ENCODE measurements at regions of chr7 and their contacts with region 1.

Region 1: GRCh38 chr7:44565097-44565794 is 8.5 kb downstream of the DDX56 start:
- DNase-seq: peak; percentile 79
- ATAC-seq: peak; percentile 91
- H3K4me3 Mint-ChIP-seq: no peak overlapping the region
- H3K27ac Mint-ChIP-seq: peak overlapping the region; percentile 40
- H3K4me1 Mint-ChIP-seq: peaks cover 6% of the 10 kb centered on the region
- H3K27me3 Mint-ChIP-seq: no peaks in the 10 kb centered on the region

Region 2: GRCh38 chr7:44240983-44241510 is 324.2 kb before region 1 on chr7:
- CTCF ChIA-PET with region 1: interaction called, 11 read pairs
- POLR2A ChIA-PET with region 1: no interaction called
- intact Hi-C with region 1: loop called (anchors 1 to 5 kb)
- DNase-seq: peak; percentile 81
- ATAC-seq: peak; percentile 95
- H3K4me3 Mint-ChIP-seq: no peak overlapping the region
- H3K27ac Mint-ChIP-seq: peak overlapping the region; percentile 51
- H3K4me1 Mint-ChIP-seq: no peaks in the 10 kb centered on the region
- H3K27me3 Mint-ChIP-seq: no peaks in the 10 kb centered on the region

Region 3: GRCh38 chr7:44348300-44348699 is 216.9 kb before region 1 on chr7:
- CTCF ChIA-PET with region 1: interaction called, 4 read pairs
- POLR2A ChIA-PET with region 1: no interaction called
- intact Hi-C with region 1: loop called in 1 of 2 experiments (anchors 5 kb)
- DNase-seq: peak; percentile 32
- ATAC-seq: peak; percentile 61
- H3K4me3 Mint-ChIP-seq: no peak overlapping the region
- H3K27ac Mint-ChIP-seq: no peak overlapping the region
- H3K4me1 Mint-ChIP-seq: no peaks in the 10 kb centered on the region
- H3K27me3 Mint-ChIP-seq: peaks cover 9% of the 10 kb centered on the region

Region 4: GRCh38 chr7:44534501-44534900 is 30.7 kb before region 1 on chr7:
- CTCF ChIA-PET with region 1: interaction called, 23 read pairs
- POLR2A ChIA-PET with region 1: no interaction called
- intact Hi-C with region 1: no loop called
- DNase-seq: peak; percentile 75
- ATAC-seq: peak; percentile 99
- H3K4me3 Mint-ChIP-seq: no peak overlapping the region
- H3K27ac Mint-ChIP-seq: no peak overlapping the region
- H3K4me1 Mint-ChIP-seq: no peaks in the 10 kb centered on the region
- H3K27me3 Mint-ChIP-seq: no peaks in the 10 kb centered on the region

Region 5: DNA sequence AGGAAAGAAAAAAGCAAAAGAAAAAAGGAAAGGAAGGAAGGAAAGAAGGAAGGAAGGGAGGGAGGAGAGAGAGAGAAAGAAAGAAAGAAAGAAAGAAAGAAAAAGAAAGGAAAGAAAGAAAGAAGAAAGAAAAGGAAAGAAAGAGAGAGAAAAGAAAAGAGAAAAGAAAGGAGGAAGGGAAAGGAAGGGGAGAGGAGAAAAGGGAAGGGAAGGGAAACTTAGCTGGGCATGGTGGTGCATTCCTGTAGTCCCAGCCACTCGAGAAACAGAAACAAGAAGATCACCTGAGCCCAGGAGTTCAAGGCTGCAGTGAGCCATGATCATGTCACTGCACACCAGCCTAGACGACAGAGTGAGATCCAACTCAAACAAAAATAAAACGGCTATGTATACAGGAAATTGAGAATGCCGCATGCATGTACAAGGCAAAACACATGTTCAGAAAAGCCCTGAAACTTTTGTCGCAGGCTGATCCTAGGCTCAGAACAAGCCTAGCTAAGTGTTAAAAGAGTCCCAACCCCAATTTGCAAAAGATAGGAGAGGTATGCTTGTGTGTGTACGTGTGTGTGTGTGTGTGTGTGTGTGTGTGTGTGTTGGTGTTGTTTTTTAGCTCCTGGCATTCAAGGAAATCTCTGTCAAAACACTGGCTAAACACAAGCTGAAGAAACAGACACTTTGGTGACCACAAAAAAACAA is 17.6 kb before region 1 on chr7:
- CTCF ChIA-PET with region 1: interaction called, 10 read pairs
- POLR2A ChIA-PET with region 1: no interaction called
- intact Hi-C with region 1: no loop called
- DNase-seq: no peak
- ATAC-seq: no peak
- H3K4me3 Mint-ChIP-seq: no peak overlapping the region
- H3K27ac Mint-ChIP-seq: no peak overlapping the region
- H3K4me1 Mint-ChIP-seq: peaks cover 11% of the 10 kb centered on the region
- H3K27me3 Mint-ChIP-seq: peaks cover 2% of the 10 kb centered on the region

Region 6: DNA sequence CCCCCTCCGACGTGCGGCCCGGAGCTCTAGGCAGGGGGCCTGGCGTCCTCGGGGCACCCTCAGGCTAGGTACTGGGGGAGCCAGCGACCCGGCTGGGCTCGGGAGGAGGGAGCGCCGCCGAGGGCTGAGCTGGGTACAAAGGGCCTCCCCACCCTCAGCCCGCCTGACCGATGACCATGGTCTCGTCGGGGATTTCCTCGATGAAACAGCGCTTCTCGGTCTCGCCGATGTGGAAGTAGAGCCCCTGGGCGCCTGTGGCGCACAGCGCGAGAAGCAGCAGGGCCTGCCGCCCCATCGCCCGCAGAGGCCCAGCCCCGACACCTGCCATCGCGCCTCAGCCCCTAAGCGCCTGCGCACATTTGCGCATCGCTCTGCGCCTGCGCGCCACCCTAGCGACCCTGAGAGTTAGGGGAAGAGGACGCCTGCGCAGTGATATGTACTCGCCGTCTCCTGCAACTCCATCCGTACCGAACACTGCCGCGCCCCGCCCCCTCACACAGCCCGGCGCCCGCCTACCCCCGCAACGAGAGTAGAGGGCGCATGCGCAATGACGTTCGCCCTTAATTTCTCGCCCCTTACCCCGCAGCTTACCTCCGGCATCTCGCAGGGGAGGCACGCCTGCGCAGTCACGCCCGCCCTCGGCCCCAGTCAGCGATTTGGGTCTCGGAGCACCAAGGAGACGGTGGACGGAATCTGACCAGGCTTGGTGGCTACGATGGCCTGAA is 16.8 kb after region 1 on chr7 and contains the start of gene TMED4:
- CTCF ChIA-PET with region 1: interaction called, 16 read pairs
- POLR2A ChIA-PET with region 1: no interaction called
- intact Hi-C with region 1: no loop called
- DNase-seq: peak; percentile 100
- ATAC-seq: peak; percentile 95
- H3K4me3 Mint-ChIP-seq: peak within 1 kb of the TSS; percentile 85
- H3K27ac Mint-ChIP-seq: peak within 1 kb of the TSS; percentile 92
- H3K4me1 Mint-ChIP-seq: peaks cover 33% of the 10 kb centered on the region
- H3K27me3 Mint-ChIP-seq: no peaks in the 10 kb centered on the region
- total RNA-seq, gene TMED4: 71.6 to 73.0 TPM

Measured in activated CD4-positive, alpha-beta T cell treated with anti-CD3 and anti-CD28 coated beads for 36 hours (primary cell).